Dorsolateral prefrontal cortex (tissue), 120 donors: ENCODE measurements at regions of chr6 and their contacts with region 1.

Region 1: GRCh38 chr6:32971581-32972352 is 3.4 kb downstream of the BRD2 start:
- DNase-seq: peak; percentile 98 to 100 (median 99)
- H3K4me3 ChIP-seq: peak overlapping the region; percentile 61 to 100 (median 95)
- H3K27ac ChIP-seq: peak overlapping the region; percentile 99 to 100 (median 100)
- H3K27me3 ChIP-seq: no peaks in the 10 kb centered on the region
- CTCF ChIP-seq: peak in 19 of 56 donors; percentile 3 to 41 (median 9)

Region 2: GRCh38 chr6:32177788-32178546 is 793.8 kb before region 1 on chr6 and contains the start of gene RNF5:
- intact Hi-C with region 1: loop called in 1 of 2 experiments (anchors 5 kb)
- DNase-seq: peak; percentile 75 to 99 (median 96)
- H3K4me3 ChIP-seq: peak within 1 kb of the TSS; percentile 49 to 98 (median 89)
- H3K27ac ChIP-seq: peak within 1 kb of the TSS; percentile 86 to 100 (median 99)
- H3K27me3 ChIP-seq: no peaks in the 10 kb centered on the region
- CTCF ChIP-seq: peak in 6 of 56 donors; percentile 2 to 23 (median 15)
- total RNA-seq, gene RNF5: 34.1 to 70.5 (median 51.5) TPM

Region 3: DNA sequence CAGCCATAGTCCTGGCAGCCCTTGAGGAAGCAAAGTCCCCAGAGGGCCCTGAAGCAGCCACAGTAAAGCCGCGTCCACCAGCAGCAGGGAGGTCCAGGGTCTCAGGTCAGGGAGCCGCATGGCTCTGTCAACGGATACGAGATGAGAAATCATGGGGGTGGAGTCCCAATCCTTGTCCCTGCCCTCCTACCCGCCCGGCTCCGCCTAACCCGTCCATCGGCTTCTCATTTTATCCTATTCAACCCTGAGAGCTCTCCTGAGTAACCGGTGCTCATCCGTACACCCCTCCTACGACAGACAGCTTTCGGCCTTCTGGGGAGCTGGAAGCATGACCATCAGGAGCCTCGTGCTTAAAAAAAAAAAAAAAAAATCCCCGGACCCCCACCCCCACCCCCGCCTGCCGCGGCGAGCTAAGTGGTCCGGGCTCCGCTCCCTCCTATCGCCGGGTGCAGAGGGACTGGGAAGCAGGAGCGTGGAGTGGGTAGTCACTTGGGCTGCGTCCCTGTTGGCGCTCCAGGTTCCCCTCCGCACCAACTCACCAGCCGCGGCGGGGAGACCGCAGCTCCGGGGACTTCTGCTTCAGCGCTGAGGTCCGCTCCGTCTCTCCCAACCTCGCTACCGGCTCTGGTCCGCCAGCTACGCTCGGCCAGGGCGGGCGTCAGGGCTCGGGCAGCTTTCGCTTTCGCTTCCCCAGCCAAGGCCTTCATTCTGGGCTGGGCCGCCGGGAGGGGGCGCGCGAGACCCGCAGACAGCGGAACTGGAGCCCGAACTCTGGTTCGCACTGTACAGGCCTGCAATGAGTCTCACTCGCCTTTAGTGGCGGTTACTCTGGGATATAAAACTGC is 133.4 kb before region 1 on chr6 and contains the start of gene TAP2:
- intact Hi-C with region 1: loop called in 1 of 2 experiments (anchors 5 kb)
- DNase-seq: peak; percentile 90 to 97 (median 96)
- H3K4me3 ChIP-seq: peak within 1 kb of the TSS; percentile 52 to 94 (median 81)
- H3K27ac ChIP-seq: peak within 1 kb of the TSS; percentile 73 to 99 (median 96)
- H3K27me3 ChIP-seq: no peaks in the 10 kb centered on the region
- CTCF ChIP-seq: peak; percentile 85 to 100 (median 97)
- total RNA-seq, gene TAP2: 12.3 to 50.8 (median 24.2) TPM

Region 4: DNA sequence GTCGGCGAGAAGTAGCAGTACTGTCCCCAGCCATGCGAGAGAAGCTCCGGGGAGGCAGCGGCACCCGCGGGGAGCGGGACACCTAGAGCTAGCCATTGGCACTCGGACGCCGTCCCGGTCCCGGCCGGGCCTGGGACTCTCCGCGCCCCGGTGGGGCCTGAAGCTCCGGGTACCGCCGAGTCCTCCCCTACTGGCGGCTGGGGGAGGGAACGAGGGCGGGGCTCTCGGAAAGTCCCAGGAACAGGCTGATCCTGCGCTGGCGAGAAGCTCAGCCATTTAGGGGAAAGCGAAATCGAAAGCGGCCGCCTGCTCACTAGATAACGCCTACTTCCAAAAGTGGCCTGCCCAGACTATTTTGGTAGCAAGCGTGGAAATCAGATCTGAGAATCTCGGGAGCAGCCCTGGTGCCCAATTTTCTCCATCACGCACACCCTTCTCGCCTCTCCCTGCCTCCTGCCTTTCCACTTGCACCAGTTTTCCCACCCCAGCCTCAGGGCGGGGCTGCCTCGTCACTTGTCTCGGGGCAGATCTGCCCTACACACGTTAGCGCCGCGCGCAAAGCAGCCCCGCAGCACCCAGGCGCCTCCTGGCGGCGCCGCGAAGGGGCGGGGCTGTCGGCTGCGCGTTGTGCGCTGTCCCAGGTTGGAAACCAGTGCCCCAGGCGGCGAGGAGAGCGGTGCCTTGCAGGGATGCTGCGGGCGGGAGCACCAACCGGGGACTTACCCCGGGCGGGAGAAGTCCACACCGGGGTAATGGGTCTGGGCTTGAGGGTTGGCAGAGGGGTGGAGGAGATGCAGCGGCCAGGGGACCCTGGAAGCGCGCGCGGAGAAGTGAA is 118.0 kb before region 1 on chr6 and contains the starts of genes PSMB9 and TAP1:
- intact Hi-C with region 1: loop called (anchors 5 kb)
- DNase-seq: peak; percentile 80 to 94 (median 92)
- H3K4me3 ChIP-seq: peak within 1 kb of the TSS; percentile 67 to 99 (median 92)
- H3K27ac ChIP-seq: peak within 1 kb of the TSS; percentile 87 to 100 (median 99)
- H3K27me3 ChIP-seq: no peaks in the 10 kb centered on the region
- CTCF ChIP-seq: peak in 55 of 56 donors; percentile 60 to 96 (median 80)
- total RNA-seq, gene PSMB9: 3.1 to 32.7 (median 12.7) TPM
- total RNA-seq, gene TAP1: 10.8 to 44.1 (median 18.6) TPM

Region 5: DNA sequence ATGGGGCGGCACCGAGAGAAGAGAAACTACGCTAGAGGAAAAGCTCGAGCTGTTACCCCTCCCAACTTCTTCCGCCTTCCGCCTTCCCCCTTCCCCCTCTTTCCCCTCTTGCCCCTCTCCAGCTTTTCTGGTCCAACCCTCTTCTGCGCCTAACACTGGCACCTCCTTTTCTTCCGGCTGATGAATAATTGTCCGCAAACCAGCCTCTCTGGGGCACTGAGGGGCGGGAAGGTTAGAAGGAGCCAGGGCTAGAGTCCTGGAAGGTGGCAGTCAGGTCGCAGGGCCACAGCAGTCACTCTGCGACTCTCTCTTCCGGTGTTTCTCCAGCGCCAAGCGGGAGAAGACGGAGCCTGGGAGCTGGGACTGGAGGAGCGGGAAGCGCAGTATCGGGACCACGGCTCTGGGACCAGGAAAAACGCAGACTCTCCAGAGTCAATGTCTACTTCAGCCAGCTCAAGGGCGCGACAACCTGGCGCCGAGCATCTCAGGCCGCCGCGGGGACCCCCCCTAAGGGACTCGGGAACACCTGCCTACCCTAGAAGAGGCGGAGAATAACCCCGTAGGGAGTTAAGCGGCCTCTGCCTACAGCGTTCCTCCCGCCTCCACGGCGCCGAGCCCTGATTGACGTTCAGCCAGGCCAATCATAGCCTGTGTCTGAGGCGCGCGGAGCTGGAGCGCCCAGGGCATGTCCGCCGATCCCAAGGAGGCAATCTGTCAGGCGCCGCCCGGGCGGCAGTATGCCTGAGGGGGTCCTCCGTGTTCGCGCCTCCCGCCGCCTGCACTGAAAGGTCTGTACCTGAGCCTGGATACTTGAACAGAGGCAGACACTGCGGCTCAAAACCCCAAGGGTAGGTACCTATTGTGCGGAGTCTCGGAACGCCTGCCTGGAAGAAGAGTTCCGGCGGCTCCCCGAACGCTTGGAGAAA is 77.4 kb before region 1 on chr6:
- intact Hi-C with region 1: loop called (anchors 2 to 5 kb)
- DNase-seq: peak; percentile 86 to 97 (median 93)
- H3K4me3 ChIP-seq: peak overlapping the region; percentile 55 to 98 (median 86)
- H3K27ac ChIP-seq: peak overlapping the region; percentile 1 to 96 (median 87)
- H3K27me3 ChIP-seq: no peaks in the 10 kb centered on the region
- CTCF ChIP-seq: peak in 43 of 56 donors; percentile 8 to 50 (median 28)

Region 6: DNA sequence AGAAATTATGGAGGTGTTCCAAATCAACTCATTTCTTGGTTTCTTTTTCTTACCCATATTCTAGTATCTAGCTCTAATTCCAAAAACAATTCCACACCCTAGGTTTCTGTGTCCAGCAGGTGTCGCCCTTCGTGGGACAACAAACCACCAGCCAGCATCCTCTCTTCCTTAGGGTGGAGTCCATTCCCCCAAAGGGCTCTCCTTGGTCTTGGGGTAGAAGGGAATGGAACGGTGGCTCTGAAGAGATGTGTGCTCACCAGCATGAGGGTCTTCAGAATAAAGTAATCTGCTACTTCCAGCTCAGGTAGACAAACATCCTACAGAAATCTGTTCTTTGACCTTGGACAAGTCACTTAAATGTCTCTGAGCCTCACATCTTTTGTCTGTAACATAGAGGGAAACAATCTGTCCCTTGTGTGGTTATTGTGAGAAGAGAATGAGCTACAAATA is 38.1 kb before region 1 on chr6:
- intact Hi-C with region 1: loop called in 1 of 2 experiments (anchors 5 kb)
- DNase-seq: peak in 9 of 10 donors; percentile 46 to 79 (median 67)
- H3K4me3 ChIP-seq: peak overlapping the region in 1 of 59 donors; percentile 13
- H3K27ac ChIP-seq: no peak overlapping the region
- H3K27me3 ChIP-seq: no peaks in the 10 kb centered on the region
- CTCF ChIP-seq: peak; percentile 67 to 93 (median 83)

Region 7: DNA sequence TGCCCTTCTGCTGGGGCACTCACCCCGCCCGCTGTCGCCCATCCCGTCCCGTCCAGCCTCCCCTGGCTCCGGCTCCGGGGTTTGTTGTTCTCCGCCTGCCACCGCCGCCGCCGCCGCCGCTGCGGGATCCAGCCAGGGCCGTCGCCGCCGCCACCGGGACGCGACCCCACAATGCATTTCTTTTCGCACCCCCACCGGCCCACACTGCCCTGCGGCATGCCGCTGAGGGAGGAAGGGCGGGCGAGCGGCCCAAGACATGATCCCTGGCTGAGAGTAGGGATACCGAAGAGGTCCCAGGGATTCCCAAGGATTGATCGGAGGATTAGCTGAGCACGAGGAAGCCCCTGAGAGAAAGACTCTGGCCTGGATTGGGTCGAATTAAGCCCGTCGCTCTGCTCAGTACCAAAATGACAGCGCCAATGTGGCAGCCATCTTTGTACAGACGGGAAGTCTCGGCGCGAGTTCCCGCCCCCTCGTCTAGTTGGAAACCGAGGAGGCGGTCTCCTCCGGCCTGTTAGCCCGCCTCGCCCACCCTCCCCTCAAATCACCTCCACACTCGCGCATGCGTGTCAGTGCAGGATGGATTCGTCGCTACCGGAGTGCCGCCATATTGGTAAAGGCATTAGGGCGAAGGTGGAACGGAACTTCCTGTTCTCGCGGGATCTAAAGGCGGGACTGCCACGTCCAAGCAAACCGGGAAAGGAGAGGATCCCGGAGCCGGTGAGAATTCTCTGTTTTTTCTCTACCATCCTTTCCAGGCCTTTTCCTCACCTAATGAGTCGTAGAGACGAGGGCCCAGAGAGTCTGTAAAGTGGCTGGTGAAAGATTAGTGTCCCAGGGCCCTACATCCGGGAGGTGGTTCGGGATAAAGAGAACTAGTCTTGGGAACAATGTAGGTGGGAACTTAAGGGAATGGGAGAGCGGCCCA is 228.7 kb after region 1 on chr6 and contains the starts of genes RXRB and SLC39A7:
- intact Hi-C with region 1: loop called (anchors 5 kb)
- DNase-seq: peak; percentile 95 to 99 (median 98)
- H3K4me3 ChIP-seq: peak within 1 kb of the TSS; percentile 66 to 99 (median 87)
- H3K27ac ChIP-seq: peak within 1 kb of the TSS; percentile 95 to 100 (median 99)
- H3K27me3 ChIP-seq: no peaks in the 10 kb centered on the region
- CTCF ChIP-seq: peak in 28 of 56 donors; percentile 5 to 61 (median 23)
- total RNA-seq, gene RXRB: 47.2 to 81.0 (median 62.9) TPM
- total RNA-seq, gene SLC39A7: 23.7 to 48.3 (median 35.6) TPM